Activated CD4-positive, alpha-beta memory T cell treated with anti-CD3 and anti-CD28 coated beads for 36 hours (primary cell): ENCODE measurements at regions of chr19 and their contacts with region 1.

Region 1: DNA sequence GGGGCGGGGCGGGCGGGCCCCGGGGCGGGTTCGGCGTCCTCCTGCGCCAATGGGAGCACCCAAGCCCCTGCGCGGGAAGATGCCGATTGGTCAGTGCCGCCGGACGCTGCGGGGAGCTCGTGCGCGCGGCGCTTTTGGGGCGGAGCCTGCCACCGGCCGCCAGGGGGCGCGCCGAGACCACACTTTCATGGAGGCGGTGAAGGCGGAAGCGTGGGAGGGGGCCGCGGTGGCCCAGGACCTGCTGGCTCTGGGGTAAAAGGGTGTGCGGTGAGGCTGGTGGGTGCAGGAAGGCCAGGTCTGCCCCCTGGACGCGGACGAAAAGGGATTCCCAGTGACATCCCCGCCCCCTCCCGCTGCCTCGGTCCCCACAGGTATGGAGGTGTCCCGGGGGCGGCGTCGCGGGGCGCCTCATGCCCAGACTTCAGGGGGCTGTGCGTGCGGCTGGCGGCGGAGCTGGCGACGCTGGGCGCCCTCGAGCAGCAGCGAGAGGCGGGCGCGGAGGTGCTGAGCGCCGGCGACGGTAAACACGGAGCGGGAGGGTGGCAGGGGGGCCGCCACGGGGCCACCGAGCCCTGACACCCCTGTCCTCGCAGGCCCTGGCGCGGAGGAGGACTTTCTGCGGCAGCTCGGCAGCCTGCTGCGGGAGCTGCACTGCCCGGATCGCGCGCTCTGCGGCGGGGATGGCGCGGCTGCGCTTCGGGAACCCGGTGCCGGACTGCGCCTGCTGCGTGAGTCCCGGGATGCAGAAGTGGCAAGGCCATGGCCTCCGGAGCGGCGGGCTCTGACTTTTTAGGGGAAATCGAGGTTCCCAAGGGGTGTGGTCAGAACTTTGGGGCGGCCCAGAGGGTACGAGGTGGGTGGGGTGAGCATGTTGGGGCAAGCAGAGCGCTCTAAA is at the start of gene FAM98C:
- DNase-seq: peak; percentile 99
- H3K4me3 Mint-ChIP-seq: peak within 1 kb of the TSS; percentile 86
- H3K27ac Mint-ChIP-seq: peak within 1 kb of the TSS; percentile 91
- H3K4me1 Mint-ChIP-seq: peaks cover 20% of the 10 kb centered on the region
- H3K27me3 Mint-ChIP-seq: no peaks in the 10 kb centered on the region
- total RNA-seq, gene FAM98C: 29.8 to 31.9 TPM

Region 2: GRCh38 chr19:37045140-37045539 is 1358.1 kb before region 1 on chr19:
- CTCF ChIA-PET with region 1: no interaction called
- POLR2A ChIA-PET with region 1: no interaction called
- intact Hi-C with region 1: no loop called
- DNase-seq: no peak
- H3K4me3 Mint-ChIP-seq: no peak overlapping the region
- H3K27ac Mint-ChIP-seq: no peak overlapping the region
- H3K4me1 Mint-ChIP-seq: no peaks in the 10 kb centered on the region
- H3K27me3 Mint-ChIP-seq: no peaks in the 10 kb centered on the region

Region 3: DNA sequence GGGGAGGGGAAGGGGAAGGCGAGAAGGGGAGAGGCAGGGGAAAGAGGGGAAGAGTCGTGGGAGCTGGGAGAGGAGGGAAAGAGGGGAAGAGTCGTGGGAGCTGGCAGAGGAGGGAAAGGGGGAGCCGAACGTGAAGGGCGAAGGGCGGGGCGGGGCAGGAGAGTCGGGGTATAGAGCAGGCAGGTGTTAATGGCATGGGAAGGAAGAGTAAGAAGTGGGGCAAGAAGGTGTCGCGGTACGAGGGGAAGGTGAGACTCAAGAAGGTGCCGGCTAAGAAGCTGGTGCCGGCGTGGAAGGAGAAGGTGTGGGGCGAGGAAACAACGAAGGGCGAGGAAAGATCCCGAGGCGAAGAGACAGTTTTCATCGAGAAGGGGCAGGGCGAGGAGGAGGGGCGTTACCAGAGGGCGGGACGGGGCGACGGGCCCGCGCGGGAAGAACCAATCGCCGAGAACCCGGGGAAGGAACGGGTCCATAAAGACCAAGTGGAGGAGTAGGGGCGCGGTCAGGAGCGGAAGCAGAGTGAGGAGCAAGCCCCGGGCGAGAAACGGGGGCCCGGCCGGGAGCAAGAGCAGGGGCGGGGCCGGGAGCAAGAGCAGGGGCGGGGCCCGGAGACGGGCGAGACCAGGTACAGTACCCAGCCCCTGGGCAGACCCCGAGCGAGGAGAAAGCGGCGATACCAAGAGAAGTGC is 67.1 kb before region 1 on chr19:
- CTCF ChIA-PET with region 1: interaction called, 6 read pairs
- POLR2A ChIA-PET with region 1: no interaction called
- intact Hi-C with region 1: loop called (anchors 2 kb)
- DNase-seq: peak; percentile 98
- H3K4me3 Mint-ChIP-seq: peak overlapping the region; percentile 91
- H3K27ac Mint-ChIP-seq: peak overlapping the region; percentile 96
- H3K4me1 Mint-ChIP-seq: peaks cover 6% of the 10 kb centered on the region
- H3K27me3 Mint-ChIP-seq: no peaks in the 10 kb centered on the region

Region 4: GRCh38 chr19:38351865-38352395 is 51.3 kb before region 1 on chr19:
- CTCF ChIA-PET with region 1: no interaction called
- POLR2A ChIA-PET with region 1: no interaction called
- intact Hi-C with region 1: no loop called
- DNase-seq: no peak
- H3K4me3 Mint-ChIP-seq: no peak overlapping the region
- H3K27ac Mint-ChIP-seq: no peak overlapping the region
- H3K4me1 Mint-ChIP-seq: no peaks in the 10 kb centered on the region
- H3K27me3 Mint-ChIP-seq: no peaks in the 10 kb centered on the region

Region 5: DNA sequence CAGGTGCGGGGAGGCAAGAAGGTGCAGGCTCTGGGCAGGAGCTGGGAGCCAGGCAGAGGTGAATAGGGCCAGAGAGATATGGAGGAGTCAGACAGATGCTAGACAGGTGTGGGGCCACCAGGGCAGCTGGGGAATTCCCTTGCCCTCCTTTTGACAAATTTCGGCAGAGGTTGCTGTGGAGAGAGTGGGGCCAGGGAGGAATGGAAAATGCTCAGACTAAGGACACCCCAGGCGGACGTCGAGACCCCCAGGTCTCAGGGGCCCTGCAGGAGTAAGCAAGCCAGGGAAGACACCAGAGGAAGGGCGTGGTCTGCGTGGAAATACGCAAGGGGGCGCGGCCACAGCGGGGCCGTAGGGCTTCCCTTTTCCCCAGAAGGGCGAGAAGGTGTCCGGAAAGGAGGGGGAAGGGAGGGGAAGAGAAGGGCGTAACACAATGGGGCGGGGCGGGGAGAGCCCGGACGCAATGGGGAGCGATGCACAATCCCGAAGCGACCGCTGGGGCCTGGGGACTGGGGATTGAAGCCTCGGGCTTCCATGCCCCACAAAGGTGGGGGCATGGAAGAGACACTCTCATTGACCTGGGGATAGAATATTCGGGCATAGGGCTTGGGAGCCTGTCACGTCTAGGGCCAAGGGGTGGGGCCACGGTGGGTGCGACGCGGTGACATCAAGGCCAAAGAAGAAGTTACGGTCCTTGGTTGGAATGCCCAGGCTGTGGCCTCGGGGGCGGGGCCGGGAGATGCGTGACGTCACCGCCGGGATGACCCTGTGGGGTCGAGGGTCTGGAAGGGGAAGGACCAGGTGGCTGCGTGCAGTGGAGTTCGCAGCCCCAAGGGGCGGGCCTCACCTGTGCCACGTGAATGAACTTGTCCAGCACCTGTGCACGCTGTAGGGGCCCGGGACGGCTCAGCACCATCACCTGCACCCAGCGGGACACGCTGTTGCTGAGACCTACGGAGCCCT is 14.6 kb after region 1 on chr19:
- CTCF ChIA-PET with region 1: interaction called, 12 read pairs
- POLR2A ChIA-PET with region 1: interaction called, 3 read pairs
- intact Hi-C with region 1: no loop called
- DNase-seq: peak; percentile 81
- H3K4me3 Mint-ChIP-seq: peak overlapping the region; percentile 69
- H3K27ac Mint-ChIP-seq: peak overlapping the region; percentile 65
- H3K4me1 Mint-ChIP-seq: peaks cover 20% of the 10 kb centered on the region
- H3K27me3 Mint-ChIP-seq: no peaks in the 10 kb centered on the region

Region 6: GRCh38 chr19:38441657-38442348 is 38.6 kb after region 1 on chr19:
- CTCF ChIA-PET with region 1: interaction called, 11 read pairs
- POLR2A ChIA-PET with region 1: interaction called, 3 read pairs
- intact Hi-C with region 1: loop called (anchors 2 kb)
- DNase-seq: peak; percentile 26
- H3K4me3 Mint-ChIP-seq: no peak overlapping the region
- H3K27ac Mint-ChIP-seq: no peak overlapping the region
- H3K4me1 Mint-ChIP-seq: peaks cover 3% of the 10 kb centered on the region
- H3K27me3 Mint-ChIP-seq: peaks cover 12% of the 10 kb centered on the region

Region 7: DNA sequence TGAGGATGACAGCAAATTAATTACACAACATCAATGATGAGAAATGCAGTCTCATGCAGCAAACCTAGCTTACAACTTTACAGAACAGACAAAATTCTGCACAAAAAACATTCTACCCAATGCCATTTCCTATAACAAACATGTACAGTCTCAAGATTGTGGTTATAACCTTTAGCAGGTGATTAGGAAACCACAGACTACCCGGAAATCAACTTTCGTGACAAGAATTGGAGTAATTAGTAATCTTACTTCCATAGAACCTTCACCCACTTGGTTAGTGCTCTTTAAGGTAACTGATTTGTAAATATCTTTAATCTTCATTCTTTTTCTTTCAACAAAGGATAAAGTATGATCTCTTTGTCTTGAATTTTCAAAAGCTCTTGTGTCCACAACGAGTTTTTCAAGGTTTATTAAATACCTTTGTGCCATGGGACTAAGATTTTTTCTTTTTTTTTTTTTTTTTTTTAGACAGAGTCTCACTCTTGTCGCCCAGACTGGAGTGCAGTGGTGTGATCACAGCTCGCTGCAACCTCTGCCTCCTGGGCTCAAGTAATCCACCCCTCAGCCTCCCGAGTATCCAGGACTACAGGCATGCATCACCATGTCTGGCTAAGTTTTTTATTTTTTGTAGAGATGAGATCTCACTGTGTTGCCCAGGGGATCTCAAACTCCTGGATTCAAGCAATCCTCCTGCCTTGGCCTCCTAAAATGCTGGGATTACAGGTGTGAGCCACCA is 135.7 kb after region 1 on chr19:
- CTCF ChIA-PET with region 1: interaction called, 6 read pairs
- POLR2A ChIA-PET with region 1: no interaction called
- intact Hi-C with region 1: loop called (anchors 2 kb)
- DNase-seq: peak; percentile 58
- H3K4me3 Mint-ChIP-seq: peak overlapping the region; percentile 49
- H3K27ac Mint-ChIP-seq: peak overlapping the region; percentile 91
- H3K4me1 Mint-ChIP-seq: peaks cover 40% of the 10 kb centered on the region
- H3K27me3 Mint-ChIP-seq: no peaks in the 10 kb centered on the region

Region 8: DNA sequence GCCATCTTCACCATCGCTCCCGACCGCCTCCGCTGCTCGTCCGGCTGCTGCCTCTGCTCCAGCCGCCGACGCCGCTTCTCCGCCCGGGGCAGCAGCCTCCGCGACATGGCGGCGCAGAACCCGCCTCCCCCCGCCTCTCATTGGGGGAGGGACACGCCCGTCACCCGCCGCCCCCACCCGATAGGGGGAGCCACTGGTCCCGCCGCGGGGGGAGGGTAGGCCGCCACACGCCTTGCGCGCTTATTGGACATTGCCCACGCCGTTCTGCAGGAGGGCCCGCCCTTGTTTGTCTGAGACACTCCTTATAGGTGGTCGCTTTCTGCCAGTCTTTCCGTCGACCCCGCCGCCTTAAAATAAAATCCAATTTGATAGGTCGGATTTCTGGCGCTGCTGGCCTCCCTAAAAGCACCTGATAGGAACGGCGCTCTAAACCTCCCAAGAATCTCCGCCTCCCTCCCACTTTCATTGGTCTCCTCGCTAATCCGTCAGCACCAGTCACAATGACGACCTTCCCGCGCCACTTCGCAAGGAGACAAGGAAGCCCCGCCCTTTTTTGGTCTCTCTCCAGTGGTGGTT is 446.7 kb after region 1 on chr19 and contains the start of gene HNRNPL:
- CTCF ChIA-PET with region 1: no interaction called
- POLR2A ChIA-PET with region 1: interaction called, 5 read pairs
- intact Hi-C with region 1: loop called (anchors 5 kb)
- DNase-seq: peak; percentile 99
- H3K4me3 Mint-ChIP-seq: peak within 1 kb of the TSS; percentile 97
- H3K27ac Mint-ChIP-seq: peak within 1 kb of the TSS; percentile 97
- H3K4me1 Mint-ChIP-seq: peaks cover 41% of the 10 kb centered on the region
- H3K27me3 Mint-ChIP-seq: no peaks in the 10 kb centered on the region
- total RNA-seq, gene HNRNPL: 646 to 671 TPM